Body of pancreas (tissue), 4 donors: ENCODE measurements at regions of chr2 and their contacts with region 1.

Region 1: DNA sequence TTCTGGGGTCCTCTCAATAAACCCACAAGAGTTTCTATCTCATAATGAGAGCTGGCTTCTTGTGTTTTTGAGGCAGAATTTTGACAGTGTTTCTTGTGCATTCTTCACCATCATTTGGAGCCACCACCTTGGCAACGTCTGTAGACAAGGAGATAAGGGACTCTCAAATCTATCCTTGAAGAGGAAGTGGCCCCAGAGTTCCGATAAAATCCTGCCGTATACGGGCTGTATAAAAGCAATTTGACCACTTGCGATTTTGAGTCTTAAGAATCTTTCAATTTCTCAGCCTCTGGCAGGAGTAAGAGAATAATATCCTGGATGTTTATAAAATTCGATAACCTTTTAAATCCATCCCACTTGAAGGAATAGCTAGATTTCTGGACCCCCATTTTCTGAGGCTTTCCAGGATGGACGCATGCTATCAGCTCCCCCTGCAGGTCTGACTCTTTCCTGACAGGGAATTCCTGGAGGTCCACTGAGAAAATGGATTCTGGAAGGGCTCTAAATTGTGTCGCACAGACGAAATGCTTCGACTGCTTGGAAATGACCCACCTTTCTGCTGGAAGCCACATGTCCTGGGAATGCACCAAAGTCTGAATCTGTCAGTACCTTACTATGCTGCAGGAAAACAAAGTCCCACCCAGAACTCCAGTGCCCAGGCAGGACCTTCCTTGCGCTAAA is 54.1 kb downstream of the E2F6 start:
- DNase-seq: peak; percentile 57 to 63 (median 60)
- ATAC-seq: peak; percentile 71
- H3K4me3 ChIP-seq: no peak overlapping the region
- H3K27ac ChIP-seq: no peak overlapping the region
- H3K4me1 ChIP-seq: peaks cover 7% of the 10 kb centered on the region
- H3K27me3 ChIP-seq: no peaks in the 10 kb centered on the region
- CTCF ChIP-seq: peak; percentile 60 to 85 (median 83)
- POLR2A ChIP-seq: no peak

Region 2: GRCh38 chr2:11234309-11234708 is 177.6 kb before region 1 on chr2:
- intact Hi-C with region 1: loop called (anchors 10 kb)
- DNase-seq: no peak
- ATAC-seq: no peak
- H3K4me3 ChIP-seq: no peak overlapping the region
- H3K27ac ChIP-seq: no peak overlapping the region
- H3K4me1 ChIP-seq: no peaks in the 10 kb centered on the region
- H3K27me3 ChIP-seq: no peaks in the 10 kb centered on the region
- CTCF ChIP-seq: peak; percentile 15 to 69 (median 59)
- POLR2A ChIP-seq: no peak

Region 3: DNA sequence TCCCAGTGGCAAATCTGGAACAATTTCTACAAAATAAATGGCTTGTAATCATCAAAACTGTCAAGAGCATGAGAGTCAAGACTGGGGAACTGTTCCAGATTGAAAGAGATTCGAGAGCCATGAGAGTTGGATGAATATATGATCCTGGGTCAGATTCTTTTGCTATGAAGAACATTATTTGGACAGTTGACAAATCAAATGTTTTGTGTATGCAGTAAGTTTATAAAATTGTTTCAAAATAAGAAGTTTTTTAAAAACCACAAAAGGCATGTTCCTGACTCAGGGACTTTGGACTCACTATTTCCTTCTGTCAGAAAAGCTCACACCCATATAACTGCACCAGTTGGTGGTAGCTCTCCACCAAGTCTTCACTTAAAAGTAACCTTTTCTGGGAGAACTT is 106.0 kb before region 1 on chr2:
- intact Hi-C with region 1: no loop called
- DNase-seq: no peak
- ATAC-seq: no peak
- H3K4me3 ChIP-seq: no peak overlapping the region
- H3K27ac ChIP-seq: no peak overlapping the region
- H3K4me1 ChIP-seq: peaks cover 16% of the 10 kb centered on the region
- H3K27me3 ChIP-seq: no peaks in the 10 kb centered on the region
- CTCF ChIP-seq: no peak
- POLR2A ChIP-seq: no peak